Aorta (tissue), 5 donors: ENCODE measurements at regions of chr9 and their contacts with region 1.

Region 1: DNA sequence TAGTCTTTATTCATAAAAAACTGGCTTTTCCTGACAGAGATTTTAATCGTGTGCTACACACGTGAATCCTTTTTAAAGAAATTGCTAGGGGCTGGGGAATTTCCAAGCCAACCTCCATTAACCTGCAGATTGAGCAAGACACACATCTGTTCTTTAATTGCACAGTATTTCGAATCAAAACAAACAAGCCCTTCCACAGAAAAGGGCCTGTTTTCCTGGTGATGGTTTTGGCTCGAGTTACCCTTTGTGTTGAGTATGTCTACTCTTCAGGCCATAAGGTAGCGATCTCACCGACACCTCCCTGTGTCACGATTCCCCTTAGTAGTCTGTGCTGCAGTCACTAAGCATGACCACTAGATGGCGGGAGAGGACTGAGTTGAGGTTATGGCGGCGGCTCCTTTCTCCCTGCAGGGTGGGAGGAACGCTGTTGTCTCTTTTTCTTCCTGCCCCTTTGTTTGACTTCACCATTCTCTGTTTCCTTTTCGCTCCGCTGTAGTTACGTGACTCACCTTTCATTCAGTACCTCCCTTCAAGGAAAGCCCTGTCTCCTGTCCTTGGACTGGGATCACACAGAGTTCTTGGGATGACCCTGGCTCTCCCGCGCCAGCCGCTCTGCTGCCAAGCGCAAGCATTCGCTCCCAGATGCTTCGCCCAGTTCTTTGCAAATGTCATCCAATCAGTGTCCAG is 137.1 kb upstream of the SLC24A2 start:
- DNase-seq: peak in 1 of 2 donors; percentile 69
- ATAC-seq: peak; percentile 92
- H3K4me3 ChIP-seq: peak overlapping the region in 1 of 2 donors; percentile 6
- H3K27ac ChIP-seq: no peak overlapping the region
- H3K4me1 ChIP-seq: no peaks in the 10 kb centered on the region
- H3K27me3 ChIP-seq: no peaks in the 10 kb centered on the region

Region 2: GRCh38 chr9:19870988-19871387 is 55.0 kb before region 1 on chr9:
- intact Hi-C with region 1: no loop called
- DNase-seq: no peak
- ATAC-seq: no peak
- H3K4me3 ChIP-seq: no peak overlapping the region
- H3K27ac ChIP-seq: no peak overlapping the region
- H3K4me1 ChIP-seq: no peaks in the 10 kb centered on the region
- H3K27me3 ChIP-seq: peaks cover 0 to 2% of the 10 kb centered on the region in 2 donors

Region 3: DNA sequence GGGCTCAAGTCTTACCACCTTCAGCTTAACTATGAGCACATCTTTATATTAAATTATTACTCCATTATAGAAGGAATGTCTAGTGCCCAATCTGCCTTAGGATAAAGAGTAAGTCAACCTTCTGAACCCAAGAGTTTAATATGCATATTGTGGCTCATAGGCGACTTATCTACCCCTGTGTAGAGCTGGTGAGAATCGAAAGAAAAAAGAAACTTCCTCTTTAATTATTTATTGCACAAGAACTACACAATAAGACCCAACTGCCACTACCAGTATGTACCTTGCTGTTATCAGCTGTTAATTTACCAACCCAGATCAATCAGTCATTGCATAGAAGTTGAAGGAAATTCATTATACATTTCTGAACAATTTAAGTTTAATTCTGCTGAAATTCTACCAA is 192.0 kb after region 1 on chr9:
- intact Hi-C with region 1: no loop called
- DNase-seq: no peak
- ATAC-seq: no peak
- H3K4me3 ChIP-seq: no peak overlapping the region
- H3K27ac ChIP-seq: no peak overlapping the region
- H3K4me1 ChIP-seq: no peaks in the 10 kb centered on the region
- H3K27me3 ChIP-seq: no peaks in the 10 kb centered on the region

Region 4: DNA sequence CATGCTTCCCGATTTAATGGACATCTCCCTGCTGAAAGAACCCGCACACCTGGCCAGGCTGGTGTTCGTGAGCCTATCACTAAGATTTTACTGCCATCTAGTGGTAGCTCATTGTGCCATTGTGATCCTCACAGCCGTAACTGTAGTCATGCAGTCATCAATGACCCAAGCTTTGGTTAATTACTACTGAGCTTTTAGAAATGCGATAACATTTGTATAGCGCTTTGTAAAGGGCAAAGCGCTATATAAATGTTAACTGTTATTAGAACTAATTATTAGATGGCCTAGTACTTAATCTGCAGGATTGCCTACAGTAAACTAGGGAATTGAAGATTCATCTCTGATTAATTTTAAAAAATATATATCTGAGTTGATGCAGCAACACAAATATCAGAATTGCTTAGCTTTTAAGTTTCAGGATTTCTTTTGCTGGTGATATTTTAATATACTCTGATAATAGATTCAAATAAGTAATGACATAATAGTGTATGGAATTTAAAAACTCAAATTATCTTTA is 1015.3 kb after region 1 on chr9:
- intact Hi-C with region 1: loop called (anchors 5 kb)
- DNase-seq: peak in 1 of 2 donors; percentile 44
- ATAC-seq: peak; percentile 87
- H3K4me3 ChIP-seq: no peak overlapping the region
- H3K27ac ChIP-seq: no peak overlapping the region
- H3K4me1 ChIP-seq: peaks cover 0 to 2% of the 10 kb centered on the region in 2 donors
- H3K27me3 ChIP-seq: no peaks in the 10 kb centered on the region